A673 (cell line): ENCODE measurements at regions of chr9 and their contacts with region 1.

Region 1: DNA sequence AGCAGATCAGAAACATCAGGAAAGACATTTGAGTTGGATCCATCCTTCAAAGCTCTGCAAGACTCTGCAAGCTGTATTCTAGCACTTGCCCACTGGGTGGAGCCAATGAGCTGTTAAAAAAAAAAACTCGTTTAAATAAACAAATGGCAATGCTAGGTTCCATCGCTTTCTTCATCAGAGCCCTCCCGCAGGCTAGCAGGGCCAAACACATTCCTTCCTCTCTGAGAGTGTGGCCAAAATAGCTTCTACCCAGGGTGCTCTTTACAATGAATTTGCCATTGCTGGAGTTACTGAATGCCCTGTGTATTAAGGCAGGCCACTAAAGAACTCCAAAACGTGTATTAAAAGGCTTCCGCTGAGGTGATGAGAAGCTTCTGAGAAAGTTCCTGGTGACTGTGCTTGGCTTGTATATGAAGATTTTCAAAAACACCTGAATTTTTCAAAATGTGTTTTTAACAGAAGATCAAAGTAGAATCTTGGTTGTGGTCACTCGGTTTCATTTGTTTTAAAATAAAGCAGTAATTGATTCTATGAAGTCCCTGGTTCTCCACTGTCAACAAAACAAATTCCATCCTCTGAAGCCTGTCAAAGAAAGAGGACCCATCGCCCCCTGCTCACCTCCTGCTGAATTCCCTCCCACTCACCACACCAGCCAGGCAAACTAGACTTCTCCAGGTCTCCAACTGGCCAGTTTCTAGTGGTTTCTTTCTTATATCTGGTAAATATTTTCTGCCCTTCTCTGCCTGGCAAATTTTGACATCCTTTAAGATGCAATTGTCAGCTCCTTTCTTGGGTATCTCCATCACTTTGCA is 36.5 kb upstream of the EQTN start:
- DNase-seq: peak; percentile 66
- H3K4me3 ChIP-seq: no peak overlapping the region
- H3K27ac ChIP-seq: no peak overlapping the region
- H3K4me1 ChIP-seq: no peaks in the 10 kb centered on the region
- H3K27me3 ChIP-seq: no peaks in the 10 kb centered on the region
- CTCF ChIP-seq: peak; percentile 65

Region 2: DNA sequence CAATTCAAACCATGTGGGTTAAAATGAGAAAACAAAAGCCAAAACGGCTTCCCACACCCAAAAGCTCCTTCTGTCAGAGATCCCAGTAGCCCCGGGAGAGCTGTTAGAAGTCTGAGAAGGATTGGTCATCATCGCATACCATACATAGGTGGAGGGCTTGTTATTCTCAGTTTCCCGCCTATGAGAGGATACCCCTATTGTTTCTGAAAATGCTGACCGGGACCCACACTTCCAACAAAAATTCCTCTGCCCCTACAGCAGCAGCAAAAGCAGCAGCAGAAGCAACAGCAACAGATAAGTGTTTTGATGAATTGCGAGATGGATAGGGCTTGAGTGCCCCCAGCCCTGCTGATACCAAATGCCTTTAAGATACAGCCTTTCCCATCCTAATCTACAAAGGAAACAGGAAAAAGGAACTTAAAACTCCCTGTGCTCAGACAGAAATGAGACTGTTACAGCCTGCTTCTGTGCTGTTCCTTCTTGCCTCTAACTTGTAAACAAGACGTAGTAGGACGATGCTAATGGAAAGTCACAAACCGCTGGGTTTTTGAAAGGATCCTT is 224.4 kb before region 1 on chr9 and contains the start of gene TEK:
- CTCF ChIA-PET with region 1: no interaction called
- POLR2A ChIA-PET with region 1: no interaction called
- intact Hi-C with region 1: no loop called
- DNase-seq: no peak
- H3K4me3 ChIP-seq: no peak within 1 kb of the TSS
- H3K27ac ChIP-seq: no peak within 1 kb of the TSS
- H3K4me1 ChIP-seq: no peaks in the 10 kb centered on the region
- H3K27me3 ChIP-seq: no peaks in the 10 kb centered on the region
- CTCF ChIP-seq: no peak
- total RNA-seq, gene TEK: not detected in 2 replicates

Region 3: GRCh38 chr9:27377147-27377807 is 43.8 kb after region 1 on chr9:
- CTCF ChIA-PET with region 1: no interaction called
- POLR2A ChIA-PET with region 1: no interaction called
- intact Hi-C with region 1: no loop called
- DNase-seq: peak; percentile 0
- H3K4me3 ChIP-seq: no peak overlapping the region
- H3K27ac ChIP-seq: no peak overlapping the region
- H3K4me1 ChIP-seq: no peaks in the 10 kb centered on the region
- H3K27me3 ChIP-seq: no peaks in the 10 kb centered on the region
- CTCF ChIP-seq: no peak

Region 4: DNA sequence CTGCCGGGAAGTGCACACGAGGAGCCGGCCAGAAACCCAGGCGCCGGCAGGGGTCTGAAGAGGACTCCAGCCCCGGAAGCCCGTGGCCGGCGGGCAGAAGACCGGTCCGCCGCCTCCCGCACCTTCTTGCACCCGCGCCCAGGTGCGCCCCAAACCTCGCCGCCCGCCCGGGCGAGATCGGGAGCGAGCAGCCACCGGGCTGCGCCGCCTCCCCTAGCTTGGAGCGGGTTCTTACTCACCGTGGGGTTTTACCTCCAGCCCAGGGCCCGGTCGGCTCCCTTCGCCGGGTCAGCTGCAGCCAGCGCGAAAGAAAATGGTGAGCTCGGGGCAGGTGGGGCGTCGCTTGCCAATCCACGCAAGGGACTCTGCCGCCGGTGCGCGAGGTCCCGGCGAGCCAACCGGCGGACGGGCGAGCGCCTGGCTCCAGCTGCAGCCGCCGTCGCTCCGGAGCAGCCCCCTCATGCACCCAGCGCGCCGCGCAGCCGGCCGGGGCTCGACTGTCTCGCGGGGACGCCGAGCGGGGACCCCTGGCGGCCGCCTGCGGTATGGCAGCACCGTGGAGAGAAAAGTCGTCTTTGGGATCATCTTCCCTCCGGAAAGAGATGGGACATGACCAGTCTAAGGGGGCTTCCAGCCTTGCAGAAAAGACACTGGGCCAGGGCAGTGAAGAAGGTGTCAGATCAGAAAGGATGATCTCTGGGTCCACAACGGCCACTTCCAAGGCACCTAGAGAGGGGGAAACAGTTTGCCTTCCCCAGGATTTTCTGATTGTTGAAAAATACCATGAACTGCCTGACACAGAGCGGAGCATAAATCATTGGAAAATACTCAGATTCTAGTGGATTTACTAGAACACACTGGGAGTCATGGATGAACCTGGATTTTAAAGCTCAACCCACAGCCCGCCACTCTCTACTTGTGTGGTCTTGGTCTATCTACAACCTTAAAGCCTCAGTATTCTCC is 196.2 kb after region 1 on chr9 and contains the start of gene MOB3B:
- CTCF ChIA-PET with region 1: interaction called, 4 read pairs
- POLR2A ChIA-PET with region 1: no interaction called
- intact Hi-C with region 1: loop called (anchors 1 kb)
- DNase-seq: peak; percentile 67
- H3K4me3 ChIP-seq: peak within 1 kb of the TSS; percentile 52
- H3K27ac ChIP-seq: no peak within 1 kb of the TSS
- H3K4me1 ChIP-seq: peaks cover 5% of the 10 kb centered on the region
- H3K27me3 ChIP-seq: peaks cover 7% of the 10 kb centered on the region
- CTCF ChIP-seq: peak; percentile 62
- total RNA-seq, gene MOB3B: 0.19 and 0.31 TPM in 2 replicates

Region 5: GRCh38 chr9:27548055-27548741 is 214.8 kb after region 1 on chr9:
- CTCF ChIA-PET with region 1: interaction called, 3 read pairs
- POLR2A ChIA-PET with region 1: no interaction called
- intact Hi-C with region 1: loop called (anchors 5 kb)
- DNase-seq: peak; percentile 21
- H3K4me3 ChIP-seq: no peak overlapping the region
- H3K27ac ChIP-seq: no peak overlapping the region
- H3K4me1 ChIP-seq: no peaks in the 10 kb centered on the region
- H3K27me3 ChIP-seq: no peaks in the 10 kb centered on the region
- CTCF ChIP-seq: peak; percentile 40

Region 6: DNA sequence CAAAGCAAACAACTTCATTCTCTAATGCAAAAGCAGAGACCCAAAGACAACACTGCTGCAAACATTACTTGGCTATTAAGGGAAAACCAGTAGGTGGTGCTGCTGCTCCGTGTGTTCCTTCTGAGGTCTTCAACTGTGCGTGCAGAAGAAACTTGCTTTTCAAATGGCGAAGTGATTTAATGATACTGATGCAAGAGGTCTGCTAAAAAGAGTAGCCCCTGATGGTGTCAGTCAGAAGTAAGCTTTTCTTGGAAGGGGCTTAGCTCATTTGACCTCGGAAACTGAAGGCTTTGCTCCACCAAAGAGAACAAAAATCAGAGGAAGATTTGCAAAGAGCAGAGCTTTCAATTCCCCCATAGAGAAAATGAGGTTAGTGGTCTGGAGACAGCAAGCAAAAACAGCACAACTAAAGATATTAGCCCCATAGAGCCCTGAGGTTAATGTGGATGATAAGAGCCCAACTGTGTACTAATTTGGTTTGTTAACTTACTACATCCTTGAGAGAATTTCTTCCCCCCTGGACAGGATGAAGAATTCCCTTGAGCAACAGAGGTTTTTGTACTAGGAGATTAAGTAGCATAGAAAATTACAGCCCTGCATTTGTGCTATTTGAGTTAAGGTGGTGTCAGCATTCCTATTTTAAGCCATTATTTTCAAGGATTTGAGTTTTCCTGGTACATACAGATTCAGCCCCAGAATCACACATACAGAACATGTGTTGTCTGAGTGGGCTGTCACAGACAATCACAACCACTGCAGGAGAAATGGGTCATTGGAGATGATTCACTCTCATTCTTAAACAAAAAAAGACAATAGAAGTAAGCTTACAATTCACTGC is 393.0 kb after region 1 on chr9:
- CTCF ChIA-PET with region 1: no interaction called
- POLR2A ChIA-PET with region 1: no interaction called
- intact Hi-C with region 1: loop called (anchors 10 kb)
- DNase-seq: peak; percentile 88
- H3K4me3 ChIP-seq: no peak overlapping the region
- H3K27ac ChIP-seq: no peak overlapping the region
- H3K4me1 ChIP-seq: peaks cover 10% of the 10 kb centered on the region
- H3K27me3 ChIP-seq: peaks cover 3% of the 10 kb centered on the region
- CTCF ChIP-seq: peak; percentile 88

Region 7: GRCh38 chr9:28073270-28073669 is 739.8 kb after region 1 on chr9:
- CTCF ChIA-PET with region 1: no interaction called
- POLR2A ChIA-PET with region 1: no interaction called
- intact Hi-C with region 1: loop called (anchors 10 kb)
- DNase-seq: peak; percentile 75
- H3K4me3 ChIP-seq: no peak overlapping the region
- H3K27ac ChIP-seq: no peak overlapping the region
- H3K4me1 ChIP-seq: no peaks in the 10 kb centered on the region
- H3K27me3 ChIP-seq: no peaks in the 10 kb centered on the region
- CTCF ChIP-seq: peak; percentile 76